Transverse colon (tissue), 4 donors: ENCODE measurements at regions of chr7 and their contacts with region 1.

Region 1: GRCh38 chr7:42237162-42237821 is at the start of gene GLI3:
- DNase-seq: peak; percentile 70
- H3K4me3 ChIP-seq: peak within 1 kb of the TSS; percentile 46 to 74 (median 64)
- H3K27ac ChIP-seq: peak within 1 kb of the TSS; percentile 81 to 95 (median 90)
- H3K4me1 ChIP-seq: peaks cover 9 to 28% (median 12%) of the 10 kb centered on the region in 4 donors
- H3K27me3 ChIP-seq: peaks cover 53% of the 10 kb centered on the region
- CTCF ChIP-seq: peak in 2 of 5 experiments; percentile 21 to 25
- EP300 ChIP-seq: no peak
- POLR2A ChIP-seq: peak; percentile 31
- total RNA-seq, gene GLI3: 3.7 to 41.1 (median 5.3) TPM

Region 2: GRCh38 chr7:41977151-41977651 is 260.1 kb before region 1 on chr7:
- in situ Hi-C with region 1: loop called in 1 of 4 experiments (anchors 25 kb)
- intact Hi-C with region 1: loop called (anchors 10 kb)
- DNase-seq: no peak
- H3K4me3 ChIP-seq: no peak overlapping the region
- H3K27ac ChIP-seq: peak overlapping the region in 2 of 4 donors; percentile 11 to 20
- H3K4me1 ChIP-seq: peaks cover 0 to 28% (median 8%) of the 10 kb centered on the region in 4 donors
- H3K27me3 ChIP-seq: no peaks in the 10 kb centered on the region
- CTCF ChIP-seq: peak; percentile 53 to 66 (median 54)
- EP300 ChIP-seq: no peak
- POLR2A ChIP-seq: no peak

Region 3: DNA sequence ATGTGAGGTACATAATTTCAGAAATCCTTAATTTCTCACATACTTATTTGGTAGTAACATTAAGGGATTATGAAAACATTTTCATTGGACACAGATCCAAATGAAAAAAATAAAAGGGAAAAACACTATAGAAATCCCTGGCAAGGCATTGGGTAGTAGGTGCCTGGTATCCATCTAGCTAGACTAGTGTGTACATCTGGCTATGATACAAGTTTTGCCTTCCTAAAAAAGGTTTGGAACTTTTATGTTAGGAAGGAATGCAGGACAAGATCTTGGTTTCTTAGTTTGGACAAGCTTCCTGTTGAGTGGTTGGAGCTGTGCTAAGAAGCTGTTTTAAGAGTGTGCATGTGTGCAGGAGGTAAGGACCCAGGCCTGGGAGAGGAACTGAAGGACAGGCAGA is 252.0 kb after region 1 on chr7:
- in situ Hi-C with region 1: no loop called
- intact Hi-C with region 1: loop called (anchors 2 kb)
- DNase-seq: no peak
- H3K4me3 ChIP-seq: no peak overlapping the region
- H3K27ac ChIP-seq: peak overlapping the region; percentile 11 to 62 (median 26)
- H3K4me1 ChIP-seq: peaks cover 0 to 23% (median 0%) of the 10 kb centered on the region in 4 donors
- H3K27me3 ChIP-seq: no peaks in the 10 kb centered on the region
- CTCF ChIP-seq: no peak
- EP300 ChIP-seq: no peak
- POLR2A ChIP-seq: no peak

Region 4: DNA sequence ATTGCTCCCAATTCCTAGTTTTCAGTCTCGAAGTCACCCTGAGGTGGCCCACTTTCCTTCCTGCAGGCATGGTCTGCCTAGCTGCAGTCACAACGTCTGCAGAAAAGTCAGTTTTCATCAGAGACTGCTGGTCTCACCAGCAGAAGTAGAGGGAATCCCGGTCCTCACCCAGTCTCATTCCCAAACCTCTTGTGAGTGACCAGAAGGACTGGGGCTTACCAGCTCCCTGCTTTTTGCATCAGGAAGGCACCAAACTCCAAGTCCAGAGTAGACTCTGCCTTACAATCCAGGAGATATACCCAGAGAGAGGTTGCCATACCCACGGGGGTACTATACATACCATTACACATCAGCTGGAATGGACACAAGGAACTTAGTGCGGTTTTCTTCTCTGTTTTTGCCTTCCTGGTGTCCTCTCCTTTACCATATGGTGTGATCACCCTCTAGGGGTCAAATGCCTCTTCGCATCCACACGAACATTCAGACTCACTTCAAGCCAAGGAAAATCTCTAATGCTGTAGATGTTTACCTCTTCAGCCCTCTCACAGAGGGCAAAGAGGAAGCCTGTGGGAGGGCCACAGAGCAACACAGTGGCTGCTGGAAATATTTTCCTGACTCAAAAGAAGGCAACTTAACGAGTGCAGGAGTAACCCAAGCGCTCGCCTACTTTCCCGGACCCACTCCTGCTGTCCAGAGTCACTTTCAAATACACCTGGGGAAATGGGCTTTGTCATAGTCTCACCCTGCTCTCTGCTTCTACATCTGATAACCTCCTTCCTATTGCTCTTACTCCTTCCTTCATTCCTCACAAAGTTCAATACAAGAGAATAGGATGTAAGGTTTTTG is 453.7 kb after region 1 on chr7:
- in situ Hi-C with region 1: loop called in 1 of 4 experiments (anchors 25 kb)
- intact Hi-C with region 1: no loop called
- DNase-seq: peak; percentile 12
- H3K4me3 ChIP-seq: no peak overlapping the region
- H3K27ac ChIP-seq: peak overlapping the region; percentile 1 to 46 (median 27)
- H3K4me1 ChIP-seq: peaks cover 0 to 24% (median 10%) of the 10 kb centered on the region in 4 donors
- H3K27me3 ChIP-seq: no peaks in the 10 kb centered on the region
- CTCF ChIP-seq: peak; percentile 24 to 47 (median 44)
- EP300 ChIP-seq: no peak
- POLR2A ChIP-seq: no peak

Region 5: GRCh38 chr7:42843205-42843800 is 606.0 kb after region 1 on chr7:
- in situ Hi-C with region 1: loop called in 1 of 4 experiments (anchors 25 kb)
- intact Hi-C with region 1: no loop called
- DNase-seq: peak; percentile 20
- H3K4me3 ChIP-seq: no peak overlapping the region
- H3K27ac ChIP-seq: no peak overlapping the region
- H3K4me1 ChIP-seq: peaks cover 0 to 5% (median 0%) of the 10 kb centered on the region in 4 donors
- H3K27me3 ChIP-seq: peaks cover 3% of the 10 kb centered on the region
- CTCF ChIP-seq: peak in 4 of 5 experiments; percentile 37 to 46 (median 40)
- EP300 ChIP-seq: no peak
- POLR2A ChIP-seq: no peak